ENCODE measurements at regions of chr10 and their contacts with region 1.

Region 1: GRCh38 chr10:22666287-22667092 is 47.9 kb downstream of the PIP4K2A start:
- DNase-seq: no peak
- ATAC-seq: no peak
- H3K4me3 ChIP-seq: no peak overlapping the region
- H3K27ac ChIP-seq: no peak overlapping the region
- H3K4me1 ChIP-seq: no peaks in the 10 kb centered on the region
- H3K27me3 ChIP-seq: no peaks in the 10 kb centered on the region
- CTCF ChIP-seq: no peak

Region 2: GRCh38 chr10:22630234-22631174 is 36.0 kb before region 1 on chr10:
- intact Hi-C with region 1: no loop called
- DNase-seq: no peak
- ATAC-seq: peak in 1 of 4 donors; percentile 24
- H3K4me3 ChIP-seq: no peak overlapping the region
- H3K27ac ChIP-seq: no peak overlapping the region
- H3K4me1 ChIP-seq: peaks cover 5% of the 10 kb centered on the region
- H3K27me3 ChIP-seq: no peaks in the 10 kb centered on the region
- CTCF ChIP-seq: no peak

Region 3: GRCh38 chr10:22712956-22713852 is 46.7 kb after region 1 on chr10:
- intact Hi-C with region 1: loop called in 1 of 2 experiments (anchors 2 kb)
- DNase-seq: peak; percentile 21 to 48
- ATAC-seq: peak; percentile 26 to 35 (median 32)
- H3K4me3 ChIP-seq: peak overlapping the region; percentile 93
- H3K27ac ChIP-seq: peak overlapping the region; percentile 4
- H3K4me1 ChIP-seq: peaks cover 24% of the 10 kb centered on the region
- H3K27me3 ChIP-seq: peaks cover 0 to 24% (median 0%) of the 10 kb centered on the region in 3 donors
- CTCF ChIP-seq: no peak